ENCODE measurements at regions of chr6 and their contacts with region 1.

Region 1: DNA sequence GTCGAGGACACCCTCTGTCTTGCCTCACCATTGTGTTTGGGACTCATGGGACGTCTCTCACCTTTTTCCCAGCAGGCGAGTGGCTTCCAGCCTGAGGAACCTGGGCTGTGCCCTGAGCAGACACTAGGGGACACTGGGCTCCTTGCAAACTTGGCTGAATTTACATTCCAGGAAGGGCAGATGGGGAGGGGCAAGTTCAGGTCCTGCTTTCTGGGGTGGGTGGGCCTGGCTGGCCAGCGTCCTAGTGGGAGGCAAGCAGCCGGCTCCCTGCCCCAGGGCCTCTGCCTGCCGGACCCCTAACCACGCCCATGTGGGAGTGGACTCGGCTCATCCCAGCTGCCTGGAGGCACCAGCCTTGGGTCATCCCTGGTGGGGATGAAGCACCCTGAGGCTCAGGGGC is 48.2 kb upstream of the MLN start:
- DNase-seq: peak; percentile 27

Region 2: GRCh38 chr6:33967966-33968724 is 116.2 kb after region 1 on chr6:
- in situ Hi-C with region 1: loop called (anchors 10 kb)
- DNase-seq: no peak

Region 3: GRCh38 chr6:34015586-34015985 is 163.6 kb after region 1 on chr6:
- in situ Hi-C with region 1: no loop called
- DNase-seq: peak; percentile 83

Measured in G401 (cell line).